ENCODE measurements at regions of chr22 and their contacts with region 1.

Region 1: DNA sequence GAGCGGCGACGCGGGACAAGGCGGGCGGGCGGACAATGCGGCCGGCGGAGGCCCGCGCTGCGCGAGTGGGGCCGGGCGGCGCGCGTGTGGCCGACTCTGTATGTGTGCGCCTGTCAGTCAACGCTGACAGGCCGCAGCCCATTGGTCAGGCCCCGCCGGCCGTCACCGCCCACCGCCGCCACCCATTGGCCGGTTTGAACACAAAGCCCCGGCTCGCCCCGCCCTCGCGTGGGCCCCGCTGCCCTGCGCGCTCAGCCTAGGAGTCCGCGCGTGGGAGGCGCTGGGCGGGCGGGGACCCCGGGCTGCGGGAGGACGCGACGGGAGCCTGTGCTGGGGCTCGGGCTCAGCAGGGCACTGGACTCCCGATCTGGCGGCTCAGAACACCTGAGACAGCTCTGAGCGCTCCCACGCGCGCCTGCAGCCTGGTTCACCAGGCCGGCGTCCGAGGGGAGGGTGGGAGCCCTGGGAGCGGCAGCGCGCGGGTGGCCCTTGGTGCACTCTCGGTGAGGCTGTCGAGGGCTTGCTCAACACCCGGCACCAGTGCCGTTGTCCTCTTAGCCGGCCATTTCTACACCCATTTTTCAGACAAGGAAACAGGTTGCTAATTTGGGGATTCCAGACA is at the start of gene SUN2:
- DNase-seq: peak; percentile 96
- ATAC-seq: peak; percentile 74
- H3K4me3 Mint-ChIP-seq: peak within 1 kb of the TSS; percentile 92
- H3K27ac Mint-ChIP-seq: peak within 1 kb of the TSS; percentile 94
- H3K4me1 Mint-ChIP-seq: peaks cover 58% of the 10 kb centered on the region
- H3K27me3 Mint-ChIP-seq: no peaks in the 10 kb centered on the region
- total RNA-seq, gene SUN2: 87.2 to 102 TPM

Region 2: GRCh38 chr22:37676736-37677492 is 1079.1 kb before region 1 on chr22:
- CTCF ChIA-PET with region 1: no interaction called
- POLR2A ChIA-PET with region 1: no interaction called
- intact Hi-C with region 1: loop called in 1 of 2 experiments (anchors 10 kb)
- DNase-seq: peak; percentile 97
- ATAC-seq: peak; percentile 78
- H3K4me3 Mint-ChIP-seq: peak overlapping the region; percentile 89
- H3K27ac Mint-ChIP-seq: peak overlapping the region; percentile 96
- H3K4me1 Mint-ChIP-seq: peaks cover 57% of the 10 kb centered on the region
- H3K27me3 Mint-ChIP-seq: no peaks in the 10 kb centered on the region

Region 3: GRCh38 chr22:38656256-38657044 is 99.6 kb before region 1 on chr22 and contains the starts of genes CBY1 and FAM227A:
- CTCF ChIA-PET with region 1: no interaction called
- POLR2A ChIA-PET with region 1: no interaction called
- intact Hi-C with region 1: loop called in 1 of 2 experiments (anchors 1 kb)
- DNase-seq: peak; percentile 89
- ATAC-seq: peak; percentile 83
- H3K4me3 Mint-ChIP-seq: peak within 1 kb of the TSS; percentile 79
- H3K27ac Mint-ChIP-seq: peak within 1 kb of the TSS; percentile 93
- H3K4me1 Mint-ChIP-seq: peaks cover 11% of the 10 kb centered on the region
- H3K27me3 Mint-ChIP-seq: no peaks in the 10 kb centered on the region
- total RNA-seq, gene CBY1: 9.8 to 11.6 TPM
- total RNA-seq, gene FAM227A: 0.30 to 0.63 TPM

Region 4: DNA sequence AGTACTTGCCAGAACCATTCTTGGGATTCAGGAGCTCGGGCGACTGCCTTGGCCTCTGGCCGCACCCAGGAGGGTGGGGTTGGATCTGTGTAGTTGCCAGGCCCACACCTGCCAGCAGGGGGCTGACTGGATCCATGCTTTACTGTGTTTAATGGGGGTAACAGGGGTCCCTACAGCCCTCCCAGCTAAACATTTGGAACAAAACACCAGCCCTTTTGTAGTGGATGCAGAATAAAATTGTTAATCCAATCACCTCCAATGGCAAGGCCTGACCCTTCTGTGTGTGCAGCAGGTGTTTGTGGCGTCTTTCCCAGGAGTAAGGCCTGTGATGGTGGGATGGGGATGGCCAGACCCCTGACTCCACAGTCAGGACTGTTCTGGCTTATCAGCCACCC is 22.7 kb before region 1 on chr22:
- CTCF ChIA-PET with region 1: interaction called, 3 read pairs
- POLR2A ChIA-PET with region 1: interaction called, 10 read pairs
- intact Hi-C with region 1: no loop called
- DNase-seq: peak; percentile 66
- ATAC-seq: peak; percentile 48
- H3K4me3 Mint-ChIP-seq: no peak overlapping the region
- H3K27ac Mint-ChIP-seq: peak overlapping the region; percentile 73
- H3K4me1 Mint-ChIP-seq: peaks cover 35% of the 10 kb centered on the region
- H3K27me3 Mint-ChIP-seq: no peaks in the 10 kb centered on the region

Region 5: DNA sequence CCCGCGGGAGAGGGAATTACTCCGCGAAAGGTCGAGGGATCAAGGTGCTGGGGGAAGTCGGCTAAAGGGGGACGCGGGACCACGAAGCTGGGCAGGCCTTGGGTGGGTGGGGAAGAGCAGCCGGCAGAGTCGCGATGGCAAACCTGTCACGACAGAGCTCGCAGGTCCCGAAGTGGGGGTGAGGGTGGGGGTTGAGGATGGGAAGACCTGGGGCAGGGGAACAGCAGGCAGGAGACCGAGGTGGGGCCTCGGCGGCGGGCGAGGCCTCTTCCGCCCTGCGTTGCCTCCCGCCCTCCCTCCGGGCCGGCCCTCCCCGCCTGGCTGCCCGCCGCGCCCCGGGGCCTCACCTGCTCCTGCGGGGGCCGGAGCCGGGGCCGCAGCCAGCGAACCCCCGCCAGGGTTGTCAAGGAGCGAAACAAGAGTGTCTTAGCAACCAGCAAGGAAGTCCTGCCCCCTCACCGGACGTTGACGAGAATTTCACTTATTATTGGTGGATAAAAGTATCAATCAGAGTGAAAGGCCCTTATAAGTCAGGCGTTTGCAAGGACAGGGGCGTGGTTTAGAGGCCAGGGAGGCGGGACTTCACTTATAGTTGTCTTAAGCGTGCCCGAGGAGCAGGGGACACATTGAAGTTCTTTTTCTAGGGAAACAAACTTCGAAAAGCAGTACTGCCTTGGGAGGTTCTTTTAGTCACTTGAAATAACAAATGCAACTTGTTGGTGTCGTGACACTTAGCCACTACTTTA is 37.9 kb after region 1 on chr22 and contains the start of gene DNAL4:
- CTCF ChIA-PET with region 1: no interaction called
- POLR2A ChIA-PET with region 1: no interaction called
- intact Hi-C with region 1: loop called (anchors 1 to 5 kb)
- DNase-seq: peak; percentile 94
- ATAC-seq: peak; percentile 98
- H3K4me3 Mint-ChIP-seq: peak within 1 kb of the TSS; percentile 84
- H3K27ac Mint-ChIP-seq: peak within 1 kb of the TSS; percentile 67
- H3K4me1 Mint-ChIP-seq: peaks cover 26% of the 10 kb centered on the region
- H3K27me3 Mint-ChIP-seq: no peaks in the 10 kb centered on the region
- total RNA-seq, gene DNAL4: 7.4 to 8.0 TPM

Region 6: GRCh38 chr22:38989466-38989865 is 233.4 kb after region 1 on chr22:
- CTCF ChIA-PET with region 1: no interaction called
- POLR2A ChIA-PET with region 1: no interaction called
- intact Hi-C with region 1: loop called in 1 of 2 experiments (anchors 5 kb)
- DNase-seq: peak; percentile 34
- ATAC-seq: no peak
- H3K4me3 Mint-ChIP-seq: no peak overlapping the region
- H3K27ac Mint-ChIP-seq: no peak overlapping the region
- H3K4me1 Mint-ChIP-seq: peaks cover 58% of the 10 kb centered on the region
- H3K27me3 Mint-ChIP-seq: peaks cover 3% of the 10 kb centered on the region

Region 7: GRCh38 chr22:39152511-39153219 is 396.6 kb after region 1 on chr22 and contains the start of gene CBX7:
- CTCF ChIA-PET with region 1: no interaction called
- POLR2A ChIA-PET with region 1: no interaction called
- intact Hi-C with region 1: loop called in 1 of 2 experiments (anchors 5 kb)
- DNase-seq: peak; percentile 95
- ATAC-seq: peak; percentile 83
- H3K4me3 Mint-ChIP-seq: peak within 1 kb of the TSS; percentile 76
- H3K27ac Mint-ChIP-seq: peak within 1 kb of the TSS; percentile 72
- H3K4me1 Mint-ChIP-seq: peaks cover 40% of the 10 kb centered on the region
- H3K27me3 Mint-ChIP-seq: peaks cover 13% of the 10 kb centered on the region
- total RNA-seq, gene CBX7: 19.9 to 20.3 TPM